ENCODE measurements at regions of chr2 and their contacts with region 1.

Region 1: GRCh38 chr2:27347641-27348040 is 8.9 kb downstream of the GTF3C2 start:
- DNase-seq: no peak
- H3K4me3 ChIP-seq: no peak overlapping the region
- H3K27ac ChIP-seq: no peak overlapping the region
- H3K4me1 ChIP-seq: no peaks in the 10 kb centered on the region
- H3K27me3 ChIP-seq: no peaks in the 10 kb centered on the region
- CTCF ChIP-seq: no peak
- POLR2A ChIP-seq: no peak

Region 2: GRCh38 chr2:26043862-26044696 is 1303.6 kb before region 1 on chr2:
- intact Hi-C with region 1: no loop called
- DNase-seq: no peak
- H3K4me3 ChIP-seq: peak overlapping the region in 1 of 3 donors; percentile 27
- H3K27ac ChIP-seq: peak overlapping the region in 1 of 2 donors; percentile 52
- H3K4me1 ChIP-seq: peaks cover 0 to 4% of the 10 kb centered on the region in 2 donors
- H3K27me3 ChIP-seq: no peaks in the 10 kb centered on the region
- CTCF ChIP-seq: no peak
- POLR2A ChIP-seq: no peak

Region 3: DNA sequence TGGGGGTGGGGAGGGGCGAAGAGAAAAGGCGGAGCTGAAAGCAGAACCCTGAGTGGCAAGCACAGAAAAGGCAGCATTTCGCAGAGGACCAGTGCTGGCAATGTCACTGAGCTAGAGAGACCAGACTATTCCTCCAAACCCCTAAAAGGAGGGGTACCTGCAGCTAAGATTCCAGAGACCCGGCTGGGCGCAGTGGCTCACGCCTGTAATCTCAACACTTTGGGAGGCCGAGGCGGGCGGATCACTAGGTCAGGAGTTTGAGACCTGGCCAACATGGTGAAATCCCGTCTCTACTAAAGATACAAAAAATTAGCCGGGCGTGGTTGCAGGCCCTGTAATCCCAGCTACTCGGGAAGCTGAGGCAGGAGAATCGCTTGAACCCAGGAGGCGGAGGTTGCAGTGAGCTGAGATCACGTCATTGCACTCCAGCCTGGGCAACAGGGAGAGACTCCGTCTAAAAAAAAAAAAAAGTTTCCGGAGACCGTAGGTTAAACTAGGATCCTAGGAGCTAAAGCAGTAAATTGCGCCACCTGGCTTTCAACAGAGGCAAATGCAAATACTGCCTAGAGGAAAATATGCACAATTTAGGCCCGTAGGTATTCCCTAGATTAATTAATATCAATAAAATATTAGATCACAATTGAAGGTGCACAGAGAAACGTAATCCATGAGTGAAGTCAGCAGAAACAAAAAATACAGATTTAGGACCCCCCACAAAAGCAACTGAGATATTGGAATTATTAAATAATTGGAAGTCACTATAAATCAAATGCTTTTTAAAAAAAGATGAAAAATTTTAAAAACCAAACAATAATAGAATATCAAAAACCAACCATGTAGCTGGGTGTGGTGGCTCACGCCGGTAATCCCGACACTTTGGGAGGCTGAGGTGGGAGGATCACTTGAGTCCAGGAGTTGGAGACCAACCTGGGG is 44.3 kb before region 1 on chr2:
- intact Hi-C with region 1: no loop called
- DNase-seq: no peak
- H3K4me3 ChIP-seq: peak overlapping the region; percentile 25 to 44 (median 39)
- H3K27ac ChIP-seq: no peak overlapping the region
- H3K4me1 ChIP-seq: no peaks in the 10 kb centered on the region
- H3K27me3 ChIP-seq: peaks cover 17 to 29% of the 10 kb centered on the region in 2 donors
- CTCF ChIP-seq: peak; percentile 63 to 78 (median 64)
- POLR2A ChIP-seq: no peak

Region 4: GRCh38 chr2:28250006-28250405 is 902.4 kb after region 1 on chr2:
- intact Hi-C with region 1: no loop called
- DNase-seq: no peak
- H3K4me3 ChIP-seq: no peak overlapping the region
- H3K27ac ChIP-seq: no peak overlapping the region
- H3K4me1 ChIP-seq: no peaks in the 10 kb centered on the region
- H3K27me3 ChIP-seq: no peaks in the 10 kb centered on the region
- CTCF ChIP-seq: no peak
- POLR2A ChIP-seq: no peak

Region 5: DNA sequence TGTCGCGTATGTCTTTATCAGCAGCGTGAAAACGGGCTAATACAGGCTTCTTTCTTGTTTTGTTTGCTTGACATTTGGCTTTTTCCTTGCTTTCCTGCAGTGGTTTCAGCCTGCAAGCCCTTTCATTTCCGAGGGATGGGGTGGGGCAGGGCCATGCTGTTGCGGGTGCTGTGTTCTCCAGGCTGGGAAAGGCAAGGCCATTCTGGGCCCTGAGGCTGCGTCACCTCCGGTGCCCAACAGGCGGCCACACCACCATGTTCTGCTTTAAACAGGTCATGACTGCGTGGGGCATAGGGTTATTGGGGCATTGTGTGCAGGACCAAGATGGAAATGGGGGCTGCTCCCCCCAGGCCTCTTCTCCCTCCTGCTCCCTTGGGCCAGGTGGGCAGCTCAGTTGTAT is 1109.6 kb after region 1 on chr2:
- intact Hi-C with region 1: loop called (anchors 5 kb)
- DNase-seq: no peak
- H3K4me3 ChIP-seq: no peak overlapping the region
- H3K27ac ChIP-seq: no peak overlapping the region
- H3K4me1 ChIP-seq: peaks cover 0 to 4% of the 10 kb centered on the region in 2 donors
- H3K27me3 ChIP-seq: no peaks in the 10 kb centered on the region
- CTCF ChIP-seq: no peak
- POLR2A ChIP-seq: no peak

Measured in breast epithelium (tissue), 4 donors.